ENCODE measurements at regions of chr7 and their contacts with region 1.

Region 1: GRCh38 chr7:143992670-143993069 is 7.5 kb upstream of the OR6B1 start:
- DNase-seq: no peak
- H3K4me3 ChIP-seq: no peak overlapping the region
- H3K27ac ChIP-seq: no peak overlapping the region
- H3K4me1 ChIP-seq: no peaks in the 10 kb centered on the region
- H3K27me3 ChIP-seq: peaks cover 0 to 5% of the 10 kb centered on the region in 2 experiments
- CTCF ChIP-seq: no peak
- POLR2A ChIP-seq: no peak

Region 2: GRCh38 chr7:143948733-143949132 is 43.9 kb before region 1 on chr7:
- CTCF ChIA-PET with region 1: no interaction called
- POLR2A ChIA-PET with region 1: no interaction called
- dilution Hi-C with region 1: no loop called
- intact Hi-C with region 1: loop called (anchors 1 kb)
- DNase-seq: no peak
- H3K4me3 ChIP-seq: no peak overlapping the region
- H3K27ac ChIP-seq: no peak overlapping the region
- H3K4me1 ChIP-seq: no peaks in the 10 kb centered on the region
- H3K27me3 ChIP-seq: peaks cover 0 to 2% of the 10 kb centered on the region in 2 experiments
- CTCF ChIP-seq: no peak
- POLR2A ChIP-seq: no peak

Measured in endothelial cell of umbilical vein (primary cell).